Activated CD4-positive, alpha-beta T cell treated with anti-CD3 and anti-CD28 coated beads for 36 hours (primary cell): ENCODE measurements at regions of chr15 and their contacts with region 1.

Region 1: DNA sequence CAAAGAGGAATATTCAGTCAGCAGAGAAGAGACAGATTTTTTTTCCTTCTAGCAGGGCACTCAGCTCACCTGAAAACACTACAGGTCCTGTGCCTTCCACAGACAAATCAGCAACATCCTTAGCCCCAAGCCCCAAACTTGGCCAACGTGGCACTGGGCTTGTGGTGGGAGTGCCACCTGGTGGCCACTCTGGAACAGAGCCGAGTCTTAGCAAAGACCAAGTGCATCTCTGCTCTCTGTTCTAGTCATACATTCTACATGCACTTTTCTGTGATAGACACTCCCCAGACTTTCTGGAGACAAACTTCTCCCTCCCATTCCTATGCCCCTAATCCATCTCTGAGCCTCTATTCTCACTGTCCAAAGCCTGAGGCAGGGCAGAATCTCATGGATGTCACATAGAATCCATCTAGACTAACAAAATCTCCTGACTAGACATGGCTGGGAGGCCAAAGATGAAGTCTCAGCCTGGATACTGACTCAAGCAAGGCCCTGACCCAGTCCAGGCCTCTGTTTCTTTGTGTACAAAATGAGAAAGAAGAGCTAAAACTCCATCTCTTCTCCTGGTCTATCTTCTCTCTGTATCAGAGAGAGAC is 5.1 kb upstream of the SEMA7A start:
- DNase-seq: peak; percentile 90
- ATAC-seq: peak; percentile 86
- H3K4me3 Mint-ChIP-seq: no peak overlapping the region
- H3K27ac Mint-ChIP-seq: no peak overlapping the region
- H3K4me1 Mint-ChIP-seq: peaks cover 30% of the 10 kb centered on the region
- H3K27me3 Mint-ChIP-seq: no peaks in the 10 kb centered on the region

Region 2: DNA sequence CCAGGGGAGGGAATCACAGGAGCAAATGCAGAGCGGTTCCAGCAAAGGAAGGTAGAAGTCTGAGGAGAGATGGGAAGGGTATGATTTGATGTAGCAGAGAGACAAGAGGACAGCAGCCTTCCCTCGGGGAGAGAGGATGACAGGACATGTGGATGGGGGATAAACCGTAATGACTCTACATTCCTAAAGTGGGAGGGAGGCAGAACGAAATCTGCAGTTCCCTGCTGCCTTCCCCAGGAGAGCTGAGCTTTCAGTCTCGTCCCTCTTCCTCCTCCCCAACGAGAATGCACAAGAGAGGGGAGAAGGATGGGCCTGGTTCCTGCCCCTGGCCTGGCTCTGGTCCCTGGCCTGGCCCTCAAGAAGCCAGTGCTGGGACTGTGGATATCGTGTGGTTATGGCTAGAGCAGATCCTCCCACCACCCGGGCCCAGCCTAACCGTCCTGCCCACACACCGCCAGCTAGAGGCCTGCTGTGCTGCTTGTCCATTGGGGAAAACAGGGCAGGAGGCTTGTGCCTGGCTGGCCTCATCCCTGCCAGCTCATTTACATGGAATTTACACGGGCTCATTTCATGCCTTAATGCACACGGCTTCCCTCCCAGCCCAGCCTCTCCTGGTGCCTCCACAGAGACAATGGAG is 31.6 kb before region 1 on chr15:
- CTCF ChIA-PET with region 1: interaction called, 15 read pairs
- POLR2A ChIA-PET with region 1: no interaction called
- intact Hi-C with region 1: loop called in 1 of 2 experiments (anchors 1 kb)
- DNase-seq: no peak
- ATAC-seq: no peak
- H3K4me3 Mint-ChIP-seq: no peak overlapping the region
- H3K27ac Mint-ChIP-seq: no peak overlapping the region
- H3K4me1 Mint-ChIP-seq: peaks cover 29% of the 10 kb centered on the region
- H3K27me3 Mint-ChIP-seq: no peaks in the 10 kb centered on the region

Region 3: GRCh38 chr15:74453925-74454763 is 15.3 kb after region 1 on chr15:
- CTCF ChIA-PET with region 1: interaction called, 12 read pairs
- POLR2A ChIA-PET with region 1: no interaction called
- intact Hi-C with region 1: no loop called
- DNase-seq: no peak
- ATAC-seq: peak; percentile 42
- H3K4me3 Mint-ChIP-seq: no peak overlapping the region
- H3K27ac Mint-ChIP-seq: no peak overlapping the region
- H3K4me1 Mint-ChIP-seq: peaks cover 22% of the 10 kb centered on the region
- H3K27me3 Mint-ChIP-seq: no peaks in the 10 kb centered on the region

Region 4: GRCh38 chr15:74470631-74471395 is 32.0 kb after region 1 on chr15:
- CTCF ChIA-PET with region 1: interaction called, 10 read pairs
- POLR2A ChIA-PET with region 1: no interaction called
- intact Hi-C with region 1: no loop called
- DNase-seq: no peak
- ATAC-seq: no peak
- H3K4me3 Mint-ChIP-seq: no peak overlapping the region
- H3K27ac Mint-ChIP-seq: no peak overlapping the region
- H3K4me1 Mint-ChIP-seq: no peaks in the 10 kb centered on the region
- H3K27me3 Mint-ChIP-seq: no peaks in the 10 kb centered on the region

Region 5: GRCh38 chr15:74489518-74490338 is 50.9 kb after region 1 on chr15:
- CTCF ChIA-PET with region 1: interaction called, 4 read pairs
- POLR2A ChIA-PET with region 1: no interaction called
- intact Hi-C with region 1: loop called in 1 of 2 experiments (anchors 1 kb)
- DNase-seq: peak; percentile 85
- ATAC-seq: peak; percentile 92
- H3K4me3 Mint-ChIP-seq: no peak overlapping the region
- H3K27ac Mint-ChIP-seq: no peak overlapping the region
- H3K4me1 Mint-ChIP-seq: peaks cover 12% of the 10 kb centered on the region
- H3K27me3 Mint-ChIP-seq: no peaks in the 10 kb centered on the region